Psoas muscle (tissue), 8 donors: ENCODE measurements at regions of chr9 and their contacts with region 1.

Region 1: DNA sequence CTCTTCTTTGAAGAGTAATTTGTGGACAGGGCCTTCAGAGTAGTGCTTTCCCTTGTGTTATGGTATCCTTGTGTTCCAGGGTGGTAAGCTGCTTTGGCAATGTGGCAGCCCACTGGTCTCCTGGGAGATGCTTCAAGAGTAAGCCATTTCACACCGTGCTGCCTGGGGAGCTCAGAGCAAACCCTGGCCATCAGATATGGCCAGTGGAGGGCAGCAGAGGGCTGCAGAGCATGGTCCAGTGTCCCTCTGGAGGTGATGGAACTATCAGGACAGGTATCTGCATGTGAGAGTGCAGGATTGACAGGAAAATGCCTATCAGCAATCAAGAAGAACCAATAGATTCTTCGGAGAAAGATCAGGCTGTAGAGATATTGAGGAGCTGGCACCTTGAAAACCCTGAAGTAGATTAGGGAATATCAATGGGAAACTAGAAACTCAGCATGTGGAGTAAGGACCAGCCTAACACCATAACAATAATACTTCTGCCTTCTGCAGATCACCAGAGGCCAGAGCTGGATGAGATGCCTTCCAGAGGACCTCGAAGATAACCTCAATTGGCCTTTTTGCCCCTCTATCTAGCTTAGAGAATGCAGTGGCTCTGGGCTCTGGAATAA is 90.8 kb downstream of the PLPPR1 start:
- DNase-seq: peak; percentile 21 to 30
- ATAC-seq: peak in 3 of 4 donors; percentile 57 to 62 (median 58)
- H3K4me3 ChIP-seq: no peak overlapping the region
- H3K27ac ChIP-seq: no peak overlapping the region
- H3K4me1 ChIP-seq: no peaks in the 10 kb centered on the region
- H3K27me3 ChIP-seq: no peaks in the 10 kb centered on the region
- CTCF ChIP-seq: peak; percentile 45

Region 2: GRCh38 chr9:101037430-101037829 is 81.9 kb before region 1 on chr9:
- intact Hi-C with region 1: loop called in 1 of 2 experiments (anchors 2 kb)
- DNase-seq: no peak
- ATAC-seq: no peak
- H3K4me3 ChIP-seq: no peak overlapping the region
- H3K27ac ChIP-seq: no peak overlapping the region
- H3K4me1 ChIP-seq: no peaks in the 10 kb centered on the region
- H3K27me3 ChIP-seq: no peaks in the 10 kb centered on the region
- CTCF ChIP-seq: no peak